Activated naive CD4-positive, alpha-beta T cell treated with anti-CD3 and anti-CD28 coated beads for 36 hours (primary cell): ENCODE measurements at regions of chr10 and their contacts with region 1.

Region 1: DNA sequence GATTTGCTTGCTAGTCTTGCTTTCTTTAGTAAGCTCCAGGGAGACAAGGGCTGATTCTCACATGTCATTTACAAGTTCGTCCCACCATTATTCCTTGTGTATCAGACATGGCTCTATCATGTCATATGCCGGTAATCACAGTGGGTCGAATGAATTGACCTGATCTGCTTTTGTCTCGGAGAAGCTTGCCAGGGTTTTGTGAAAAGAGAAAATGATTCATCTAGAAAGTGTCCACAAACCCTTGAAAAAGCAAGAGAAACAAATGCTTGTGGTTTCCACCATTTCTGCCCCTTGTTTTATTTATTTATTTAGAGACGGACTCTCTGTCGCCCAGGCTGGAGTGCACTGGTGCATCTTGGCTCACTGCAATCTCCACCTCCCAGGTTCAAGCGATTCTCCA is 278.5 kb downstream of the TCF7L2 start:
- DNase-seq: no peak
- H3K4me3 Mint-ChIP-seq: no peak overlapping the region
- H3K27ac Mint-ChIP-seq: no peak overlapping the region
- H3K4me1 Mint-ChIP-seq: peaks cover 22% of the 10 kb centered on the region
- H3K27me3 Mint-ChIP-seq: peaks cover 35% of the 10 kb centered on the region

Region 2: DNA sequence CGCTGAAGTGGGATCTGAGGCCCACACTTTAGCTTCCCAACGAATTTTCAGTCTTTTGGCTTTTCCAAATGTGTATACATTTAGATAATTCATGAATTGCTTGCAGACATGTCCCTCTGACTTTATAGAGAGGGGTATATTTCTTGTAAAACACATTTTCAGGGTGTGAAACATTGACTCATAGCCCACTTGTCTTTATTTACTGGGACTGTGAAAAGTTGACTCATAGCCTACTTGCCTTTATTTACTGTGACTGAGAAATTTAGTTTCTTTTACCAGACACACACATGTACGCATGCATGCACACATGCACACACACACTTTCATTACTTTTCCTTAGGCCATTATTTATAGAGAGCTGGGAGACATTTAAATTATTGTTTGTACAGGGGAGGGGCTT is 702.4 kb before region 1 on chr10:
- CTCF ChIA-PET with region 1: no interaction called
- intact Hi-C with region 1: loop called (anchors 5 kb)
- DNase-seq: no peak
- H3K4me3 Mint-ChIP-seq: no peak overlapping the region
- H3K27ac Mint-ChIP-seq: no peak overlapping the region
- H3K4me1 Mint-ChIP-seq: peaks cover 34% of the 10 kb centered on the region
- H3K27me3 Mint-ChIP-seq: no peaks in the 10 kb centered on the region

Region 3: GRCh38 chr10:112898540-112899395 is 329.8 kb before region 1 on chr10:
- CTCF ChIA-PET with region 1: no interaction called
- intact Hi-C with region 1: no loop called
- DNase-seq: no peak
- H3K4me3 Mint-ChIP-seq: no peak overlapping the region
- H3K27ac Mint-ChIP-seq: no peak overlapping the region
- H3K4me1 Mint-ChIP-seq: no peaks in the 10 kb centered on the region
- H3K27me3 Mint-ChIP-seq: no peaks in the 10 kb centered on the region

Region 4: GRCh38 chr10:113720386-113720785 is 491.9 kb after region 1 on chr10:
- CTCF ChIA-PET with region 1: no interaction called
- intact Hi-C with region 1: no loop called
- DNase-seq: no peak
- H3K4me3 Mint-ChIP-seq: no peak overlapping the region
- H3K27ac Mint-ChIP-seq: no peak overlapping the region
- H3K4me1 Mint-ChIP-seq: no peaks in the 10 kb centered on the region
- H3K27me3 Mint-ChIP-seq: no peaks in the 10 kb centered on the region